Head of caudate nucleus (tissue), 42 donors: ENCODE measurements at regions of chr4 and their contacts with region 1.

Region 1: GRCh38 chr4:76949276-76950051 is at the start of gene SEPTIN11:
- DNase-seq: peak; percentile 79 to 97 (median 92)

Region 2: DNA sequence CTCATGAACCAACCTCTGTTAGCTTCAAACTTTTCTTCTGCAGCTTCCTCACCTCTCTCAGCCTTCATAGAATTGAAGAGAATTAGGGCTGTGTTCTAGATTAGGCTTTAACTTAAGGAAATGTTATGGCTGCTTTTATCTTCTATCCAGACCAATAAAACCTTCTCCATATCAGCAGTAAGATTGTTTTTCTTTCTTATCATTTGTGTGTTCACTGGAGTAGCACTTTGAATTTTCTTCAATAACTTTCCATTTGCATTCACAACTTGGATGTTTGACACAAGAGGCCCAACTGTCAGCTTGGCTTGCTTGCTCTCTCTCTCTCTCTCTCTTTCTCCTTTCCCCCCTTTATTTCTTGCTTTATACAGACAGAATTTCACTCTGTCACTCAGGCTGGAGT is 28.7 kb before region 1 on chr4:
- intact Hi-C with region 1: no loop called
- DNase-seq: no peak

Region 3: DNA sequence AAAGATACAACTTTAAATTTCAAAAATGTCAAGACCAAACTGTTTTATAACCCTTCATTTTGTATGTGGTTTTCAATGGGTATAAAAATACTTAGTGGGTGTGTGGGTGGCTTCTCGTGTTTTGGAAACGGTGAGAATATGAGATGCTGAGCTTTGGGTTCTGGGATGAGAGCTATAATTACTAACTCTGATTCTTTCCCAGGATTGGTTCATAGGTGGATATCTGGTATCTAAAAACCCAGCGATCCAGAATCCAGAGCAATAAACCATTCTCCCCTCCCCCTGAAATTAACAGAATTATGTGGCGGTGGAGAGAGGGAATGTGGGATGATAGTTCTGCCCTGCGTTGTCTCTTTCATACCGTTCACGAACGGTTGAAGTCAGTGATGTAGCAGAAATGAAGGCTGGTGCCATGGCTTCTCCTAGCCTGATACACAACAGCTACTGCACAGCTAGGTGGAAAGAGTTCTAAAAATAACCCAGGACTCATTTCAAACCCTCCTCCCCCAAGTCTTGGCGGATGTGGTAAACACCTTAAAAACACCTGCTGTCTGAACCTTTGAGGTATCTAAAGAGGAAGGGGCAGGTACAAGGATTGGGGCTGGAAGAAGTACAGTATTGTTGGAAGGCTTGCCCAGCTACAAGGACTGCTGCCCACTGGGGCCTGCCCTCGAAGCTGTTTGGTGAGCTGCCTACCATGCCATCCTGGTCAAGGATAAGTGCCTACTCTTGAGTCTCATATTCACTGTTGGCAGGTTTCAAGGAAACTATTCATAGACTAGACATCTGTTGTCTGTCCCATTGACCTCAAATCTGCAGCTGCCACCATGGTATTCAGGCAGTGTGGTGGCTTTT is 44.5 kb after region 1 on chr4:
- intact Hi-C with region 1: loop called (anchors 5 kb)
- DNase-seq: peak in 4 of 42 donors; percentile 23 to 48 (median 30)

Region 4: GRCh38 chr4:77044461-77045150 is 95.1 kb after region 1 on chr4:
- intact Hi-C with region 1: loop called (anchors 10 kb)
- DNase-seq: no peak

Region 5: DNA sequence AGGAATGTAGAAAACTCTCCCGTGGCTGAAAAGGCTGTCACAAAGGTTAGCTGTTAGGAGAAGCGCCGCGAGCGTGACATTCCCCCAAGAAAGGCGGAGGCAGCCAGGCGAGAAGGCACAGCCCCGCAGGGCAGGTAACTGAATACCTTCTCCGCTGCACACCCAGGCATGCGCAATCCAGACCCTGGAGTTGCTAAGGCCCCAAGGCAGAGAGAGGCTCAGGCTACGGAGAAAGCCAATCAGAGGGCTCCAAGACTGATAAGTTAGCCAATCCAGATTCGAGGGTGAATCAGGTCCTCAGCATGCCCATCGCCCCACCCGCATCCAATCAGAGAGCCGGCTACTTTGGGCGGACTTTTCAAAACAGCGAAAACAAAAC is 207.1 kb after region 1 on chr4:
- intact Hi-C with region 1: loop called (anchors 10 kb)
- DNase-seq: peak; percentile 91 to 99 (median 98)